Activated CD8-positive, alpha-beta memory T cell treated with anti-CD3 and anti-CD28 coated beads, Interleukin-2, amount 10 ng/mL, durations not matched to agents 7 days and 5 days (primary cell): ENCODE measurements at regions of chr6 and their contacts with region 1.

Region 1: DNA sequence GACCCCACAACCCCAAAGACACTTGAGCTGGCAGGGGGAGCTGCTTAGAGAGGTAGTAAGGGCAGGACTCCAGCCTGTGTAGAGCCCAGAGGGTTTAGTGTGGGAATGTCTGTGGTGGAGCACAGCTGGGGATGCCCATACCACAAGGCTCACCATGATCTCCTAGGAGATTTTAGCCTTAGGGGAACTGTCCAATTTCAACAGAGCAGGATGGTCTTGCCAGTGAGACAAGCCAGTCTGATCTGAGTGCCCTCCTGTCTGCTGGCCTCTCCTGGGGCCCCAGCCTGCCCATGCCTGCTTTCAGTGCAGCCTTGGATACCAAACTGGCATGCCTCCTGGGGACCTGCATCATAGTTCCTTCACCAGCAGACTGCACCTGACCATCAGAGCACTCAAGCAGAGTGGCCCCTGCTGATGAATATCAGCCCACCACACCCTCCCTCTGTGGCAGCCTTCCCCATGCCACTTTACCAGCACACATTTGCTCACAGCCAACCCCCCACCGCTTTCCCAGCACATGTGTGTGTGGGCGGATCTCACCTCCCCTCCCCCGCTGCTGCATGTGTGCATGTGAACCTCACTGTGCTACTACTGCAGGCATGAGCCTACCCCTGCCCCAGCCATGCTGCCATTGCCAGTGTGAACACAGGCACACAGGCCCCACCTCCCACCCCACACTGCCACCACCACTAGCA is 7.8 kb upstream of the TREM1 start:
- DNase-seq: no peak
- ATAC-seq: no peak
- H3K4me3 Mint-ChIP-seq: no peak overlapping the region
- H3K27ac Mint-ChIP-seq: no peak overlapping the region
- H3K4me1 Mint-ChIP-seq: peaks cover 19% of the 10 kb centered on the region
- H3K27me3 Mint-ChIP-seq: peaks cover 8% of the 10 kb centered on the region

Region 2: DNA sequence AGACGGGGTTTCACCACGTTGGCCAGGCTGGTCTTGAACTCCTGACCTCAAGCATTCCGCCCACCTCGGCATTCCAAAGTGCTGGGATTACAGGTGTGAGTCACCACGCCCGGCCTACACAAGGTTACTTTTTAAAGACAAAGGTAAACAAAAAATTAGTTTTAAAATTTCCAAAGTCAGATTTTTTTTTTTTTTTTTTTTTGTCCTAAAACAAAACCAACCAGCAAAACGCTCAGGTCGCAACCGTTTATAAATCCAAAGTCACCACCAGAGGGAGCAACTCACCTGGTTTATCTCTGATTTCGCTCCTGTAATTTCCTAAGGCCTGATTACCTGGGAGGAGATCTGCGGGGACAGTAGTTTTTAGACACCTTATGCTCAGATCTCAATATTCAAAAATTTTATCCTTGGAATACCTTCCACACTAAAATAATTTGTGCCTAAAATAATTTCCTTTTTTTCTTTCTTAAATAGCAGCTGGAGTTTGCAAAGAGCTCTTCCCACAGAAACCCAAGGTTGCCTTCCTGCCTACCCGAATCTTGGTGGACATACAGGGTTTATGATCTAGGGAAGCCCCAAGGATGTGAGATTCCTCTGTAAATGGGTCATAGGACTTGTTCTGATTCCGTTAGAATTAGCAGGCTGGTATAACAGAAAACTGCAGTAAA is 12.0 kb after region 1 on chr6:
- CTCF ChIA-PET with region 1: interaction called, 11 read pairs
- DNase-seq: peak; percentile 61
- ATAC-seq: no peak
- H3K4me3 Mint-ChIP-seq: no peak overlapping the region
- H3K27ac Mint-ChIP-seq: no peak overlapping the region
- H3K4me1 Mint-ChIP-seq: peaks cover 2% of the 10 kb centered on the region
- H3K27me3 Mint-ChIP-seq: peaks cover 46% of the 10 kb centered on the region